K562 (cell line): ENCODE measurements at regions of chr4 and their contacts with region 1.

Region 1: GRCh38 chr4:119212234-119212963 is at the start of gene USP53:
- DNase-seq: peak; percentile 97 to 98 (median 97)
- ATAC-seq: peak; percentile 95
- H3K4me3 ChIP-seq: peak within 1 kb of the TSS; percentile 72
- H3K27ac ChIP-seq: peak within 1 kb of the TSS; percentile 87
- H3K4me1 ChIP-seq: peaks cover 4 to 8% of the 10 kb centered on the region in 2 experiments; a peak in 4 of 5 replicates
- H3K27me3 ChIP-seq: no peaks in the 10 kb centered on the region
- CTCF ChIP-seq: no peak
- EP300 ChIP-seq: no peak
- POLR2A ChIP-seq: peak; percentile 97
- RAD21 ChIP-seq: no peak; a peak in 1 of 4 replicates
- polyA plus RNA-seq, gene USP53: 2.9 TPM

Region 2: GRCh38 chr4:119041951-119042560 is 170.3 kb before region 1 on chr4:
- CTCF ChIA-PET with region 1: no interaction called
- POLR2A ChIA-PET with region 1: interaction called, 4 read pairs
- in situ Hi-C with region 1: no loop called
- intact Hi-C with region 1: loop called (anchors 5 kb)
- DNase-seq: peak; percentile 33 to 71 (median 50)
- ATAC-seq: peak; percentile 97
- H3K4me3 ChIP-seq: no peak overlapping the region
- H3K27ac ChIP-seq: no peak overlapping the region
- H3K4me1 ChIP-seq: no peaks in the 10 kb centered on the region
- H3K27me3 ChIP-seq: no peaks in the 10 kb centered on the region
- CTCF ChIP-seq: peak; percentile 65 to 72 (median 69)
- EP300 ChIP-seq: no peak
- POLR2A ChIP-seq: no peak
- RAD21 ChIP-seq: peak; percentile 77 to 84

Region 3: GRCh38 chr4:119093042-119093827 is 119.2 kb before region 1 on chr4:
- CTCF ChIA-PET with region 1: no interaction called
- POLR2A ChIA-PET with region 1: no interaction called
- in situ Hi-C with region 1: no loop called
- intact Hi-C with region 1: no loop called
- DNase-seq: no peak
- ATAC-seq: no peak
- H3K4me3 ChIP-seq: no peak overlapping the region
- H3K27ac ChIP-seq: no peak overlapping the region
- H3K4me1 ChIP-seq: no peaks in the 10 kb centered on the region
- H3K27me3 ChIP-seq: no peaks in the 10 kb centered on the region
- CTCF ChIP-seq: no peak
- EP300 ChIP-seq: no peak
- POLR2A ChIP-seq: no peak
- RAD21 ChIP-seq: no peak